Mucosa of descending colon (tissue), 3 donors: ENCODE measurements at regions of chr2 and their contacts with region 1.

Region 1: GRCh38 chr2:193868833-193869232 is 1674.1 kb upstream of the TMEFF2 start:
- DNase-seq: no peak
- ATAC-seq: no peak
- H3K4me3 ChIP-seq: no peak overlapping the region
- H3K4me1 ChIP-seq: no peaks in the 10 kb centered on the region
- CTCF ChIP-seq: no peak

Region 2: GRCh38 chr2:194205568-194206227 is 336.9 kb after region 1 on chr2:
- intact Hi-C with region 1: loop called in 1 of 2 experiments (anchors 5 kb)
- DNase-seq: no peak
- ATAC-seq: no peak
- H3K4me3 ChIP-seq: no peak overlapping the region
- H3K4me1 ChIP-seq: no peaks in the 10 kb centered on the region
- CTCF ChIP-seq: no peak